ENCODE measurements at regions of chr3 and their contacts with region 1.

Region 1: GRCh38 chr3:185572183-185572582 is 13.9 kb upstream of the SENP2 start:
- DNase-seq: no peak

Region 2: DNA sequence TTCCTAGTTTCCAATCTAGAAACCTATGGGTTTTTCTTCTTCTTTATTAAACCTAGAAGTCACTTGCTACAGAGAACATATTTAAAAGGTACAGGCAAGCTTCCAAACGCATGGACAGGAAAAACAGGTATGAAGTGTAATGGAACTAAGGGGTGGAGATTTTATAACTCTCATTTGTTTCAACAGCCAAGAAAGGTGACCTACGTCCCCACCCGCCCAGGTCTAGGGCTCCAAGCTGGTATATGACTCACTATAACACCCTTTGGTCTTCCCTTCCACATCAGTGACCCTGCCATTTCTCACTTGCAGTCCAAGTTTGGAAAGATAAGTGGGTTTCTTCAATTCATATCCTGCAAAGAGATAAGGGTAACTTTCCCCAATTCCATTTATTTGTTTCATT is 13.8 kb before region 1 on chr3:
- CTCF ChIA-PET with region 1: interaction called, 12 read pairs
- POLR2A ChIA-PET with region 1: interaction called, 4 read pairs
- DNase-seq: no peak

Region 3: GRCh38 chr3:185585859-185586685 is 13.9 kb after region 1 on chr3 and contains the start of gene SENP2:
- CTCF ChIA-PET with region 1: interaction called, 7 read pairs
- POLR2A ChIA-PET with region 1: interaction called, 11 read pairs
- DNase-seq: peak; percentile 89

Region 4: DNA sequence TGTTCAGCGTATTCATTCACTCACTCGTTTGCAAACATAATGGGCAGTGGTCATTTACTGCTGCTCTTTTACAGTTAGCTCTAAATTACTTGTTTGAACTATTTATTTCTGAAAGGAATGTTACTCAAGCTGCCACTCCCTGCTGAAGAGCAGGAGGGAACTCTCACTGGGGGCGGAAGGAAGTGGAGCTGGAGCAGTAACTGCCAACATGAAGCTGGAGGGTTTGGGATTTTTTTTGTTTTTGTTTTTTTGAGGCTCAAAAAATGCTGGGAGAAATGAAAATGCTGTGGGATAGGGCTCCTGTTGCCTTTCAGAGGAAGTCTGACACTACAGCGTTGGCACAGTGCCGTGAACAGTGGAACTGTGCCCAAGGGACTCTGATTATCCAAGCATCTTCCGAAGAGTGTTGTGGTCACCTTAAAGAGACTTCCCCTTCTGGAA is 58.0 kb after region 1 on chr3:
- CTCF ChIA-PET with region 1: no interaction called
- POLR2A ChIA-PET with region 1: no interaction called
- DNase-seq: no peak